ENCODE measurements at regions of chr10 and their contacts with region 1.

Region 1: DNA sequence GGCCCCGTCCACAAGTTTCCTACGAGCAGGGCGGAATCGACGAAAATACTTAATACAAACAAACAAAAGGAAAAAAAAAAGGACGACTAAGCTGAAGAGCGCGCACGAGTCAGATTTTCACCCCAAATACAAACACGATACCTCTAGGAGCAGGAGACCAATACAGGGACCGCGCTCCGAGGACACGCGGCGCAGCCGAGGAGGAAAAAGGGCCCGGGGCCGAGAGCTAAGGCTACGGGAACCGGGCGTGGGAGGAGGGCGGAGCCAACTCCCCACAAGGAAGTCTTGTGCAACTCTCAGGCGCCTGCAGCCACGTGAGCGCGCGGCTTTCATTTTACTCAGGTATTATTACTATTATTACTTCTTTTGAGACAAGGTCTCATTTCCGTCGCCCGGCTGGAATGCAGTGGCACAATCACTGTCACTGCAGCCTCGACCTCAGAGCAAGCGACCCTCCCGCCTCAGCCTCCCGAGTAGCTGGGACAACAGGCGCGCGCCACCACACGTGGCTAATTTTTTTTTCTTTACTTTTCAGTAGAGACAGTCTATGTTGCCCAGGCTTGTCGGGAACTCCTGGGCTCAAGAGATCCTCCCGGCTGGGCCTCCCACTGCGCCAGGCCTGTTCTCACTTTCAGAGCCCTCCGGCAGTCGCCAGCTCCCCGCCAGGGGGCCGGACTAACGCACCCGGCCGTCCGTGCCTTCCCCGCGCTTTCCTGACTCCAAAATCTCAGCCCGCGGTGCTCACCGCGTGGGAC is 1.2 kb downstream of the HNRNPF start:
- DNase-seq: peak; percentile 94 to 95
- H3K4me3 ChIP-seq: peak overlapping the region; percentile 70
- H3K4me3 Mint-ChIP-seq: peak overlapping the region; percentile 81
- H3K27ac Mint-ChIP-seq: peak overlapping the region; percentile 94
- H3K4me1 ChIP-seq: peaks cover 40% of the 10 kb centered on the region
- H3K4me1 Mint-ChIP-seq: peaks cover 32% of the 10 kb centered on the region
- H3K27me3 ChIP-seq: no peaks in the 10 kb centered on the region
- H3K27me3 Mint-ChIP-seq: no peaks in the 10 kb centered on the region
- CTCF ChIP-seq: peak; percentile 54 to 73

Region 2: GRCh38 chr10:43361986-43362839 is 45.5 kb before region 1 on chr10:
- CTCF ChIA-PET with region 1: no interaction called
- POLR2A ChIA-PET with region 1: interaction called, 7 read pairs
- intact Hi-C with region 1: loop called (anchors 1 kb)
- DNase-seq: peak; percentile 99
- H3K4me3 ChIP-seq: peak overlapping the region; percentile 66
- H3K4me3 Mint-ChIP-seq: peak overlapping the region; percentile 98
- H3K27ac Mint-ChIP-seq: peak overlapping the region; percentile 71
- H3K4me1 ChIP-seq: peaks cover 11% of the 10 kb centered on the region
- H3K4me1 Mint-ChIP-seq: peaks cover 16% of the 10 kb centered on the region
- H3K27me3 ChIP-seq: no peaks in the 10 kb centered on the region
- H3K27me3 Mint-ChIP-seq: no peaks in the 10 kb centered on the region
- CTCF ChIP-seq: peak; percentile 68 to 83

Region 3: DNA sequence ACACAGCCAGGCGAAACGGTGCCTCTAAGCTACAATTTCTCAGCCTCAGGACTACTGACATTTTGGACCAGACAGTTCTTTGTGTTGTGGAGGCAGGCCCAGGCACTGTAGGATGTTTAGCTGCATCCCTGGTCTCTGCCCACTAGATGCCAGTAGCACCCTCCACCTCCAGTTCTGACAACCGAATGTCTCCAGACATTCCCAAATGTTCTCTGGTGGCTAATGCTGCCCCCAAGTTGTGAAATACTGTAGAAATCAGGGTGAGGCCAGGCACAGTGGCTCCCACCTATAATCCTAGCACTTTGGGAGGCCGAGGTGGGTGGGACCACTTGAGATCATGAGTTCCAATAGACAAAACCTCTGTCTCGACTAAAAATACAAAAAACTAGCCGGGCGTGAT is 17.0 kb before region 1 on chr10:
- CTCF ChIA-PET with region 1: no interaction called
- POLR2A ChIA-PET with region 1: interaction called, 81 read pairs
- intact Hi-C with region 1: no loop called
- DNase-seq: peak in 1 of 2 experiments; percentile 66
- H3K4me3 ChIP-seq: no peak overlapping the region
- H3K4me3 Mint-ChIP-seq: peak overlapping the region; percentile 4
- H3K27ac Mint-ChIP-seq: peak overlapping the region; percentile 68
- H3K4me1 ChIP-seq: peaks cover 37% of the 10 kb centered on the region
- H3K4me1 Mint-ChIP-seq: peaks cover 60% of the 10 kb centered on the region
- H3K27me3 ChIP-seq: no peaks in the 10 kb centered on the region
- H3K27me3 Mint-ChIP-seq: no peaks in the 10 kb centered on the region
- CTCF ChIP-seq: peak; percentile 55 to 71

Region 4: GRCh38 chr10:43396928-43397624 is 10.7 kb before region 1 on chr10:
- CTCF ChIA-PET with region 1: interaction called, 4 read pairs
- POLR2A ChIA-PET with region 1: interaction called, 81 read pairs
- intact Hi-C with region 1: loop called (anchors 1 kb)
- DNase-seq: peak; percentile 99
- H3K4me3 ChIP-seq: peak overlapping the region; percentile 62
- H3K4me3 Mint-ChIP-seq: peak overlapping the region; percentile 81
- H3K27ac Mint-ChIP-seq: peak overlapping the region; percentile 94
- H3K4me1 ChIP-seq: peaks cover 59% of the 10 kb centered on the region
- H3K4me1 Mint-ChIP-seq: peaks cover 33% of the 10 kb centered on the region
- H3K27me3 ChIP-seq: no peaks in the 10 kb centered on the region
- H3K27me3 Mint-ChIP-seq: no peaks in the 10 kb centered on the region
- CTCF ChIP-seq: no peak

Region 5: DNA sequence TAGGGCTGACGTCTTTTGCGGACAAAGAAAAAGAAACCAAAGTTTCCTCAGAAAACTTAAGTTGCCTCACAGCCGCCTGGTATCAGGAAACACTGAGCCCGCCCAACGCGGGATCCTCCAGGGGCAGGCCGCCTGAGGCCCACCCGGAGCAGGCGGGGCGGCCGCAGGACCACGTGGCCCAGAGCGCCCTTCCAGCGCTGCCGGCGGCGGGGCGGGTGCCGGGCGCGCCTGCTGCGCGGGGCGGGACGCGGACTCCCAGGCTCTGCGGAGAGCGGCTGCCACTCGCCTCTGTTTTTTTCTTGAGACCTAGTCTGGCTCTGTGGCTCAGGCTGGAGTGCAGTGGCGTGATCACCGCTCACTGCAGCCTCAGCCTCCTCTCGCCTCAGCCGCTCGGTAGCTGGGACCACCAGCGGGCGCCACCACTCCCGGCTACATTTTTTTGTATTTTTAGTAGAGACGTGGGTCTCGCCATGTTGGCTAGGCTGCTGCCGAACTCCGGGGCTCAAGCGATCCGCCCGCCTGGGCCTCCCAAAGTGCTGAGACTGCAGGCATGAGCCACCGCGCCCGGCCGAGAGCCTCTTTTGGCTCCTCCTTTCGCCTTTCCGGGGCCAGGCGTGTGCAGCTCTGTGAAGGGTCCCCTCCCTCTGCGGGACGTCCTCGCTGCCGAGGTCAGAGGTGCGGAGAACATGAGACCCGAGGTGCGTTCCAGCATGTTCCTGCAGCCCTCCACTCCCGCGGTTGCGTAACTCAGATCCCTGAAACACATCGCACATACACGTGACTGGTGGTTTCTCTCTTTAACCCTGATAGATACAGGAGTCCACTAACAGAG is 12.8 kb after region 1 on chr10:
- CTCF ChIA-PET with region 1: interaction called, 8 read pairs
- POLR2A ChIA-PET with region 1: interaction called, 27 read pairs
- intact Hi-C with region 1: no loop called
- DNase-seq: peak; percentile 97 to 98
- H3K4me3 ChIP-seq: peak overlapping the region; percentile 68
- H3K4me3 Mint-ChIP-seq: peak overlapping the region; percentile 96
- H3K27ac Mint-ChIP-seq: peak overlapping the region; percentile 99
- H3K4me1 ChIP-seq: peaks cover 9% of the 10 kb centered on the region; the same call in 1 of the 2 replicates
- H3K4me1 Mint-ChIP-seq: peaks cover 17% of the 10 kb centered on the region
- H3K27me3 ChIP-seq: no peaks in the 10 kb centered on the region
- H3K27me3 Mint-ChIP-seq: no peaks in the 10 kb centered on the region
- CTCF ChIP-seq: peak in 1 of 2 experiments; percentile 33

Region 6: DNA sequence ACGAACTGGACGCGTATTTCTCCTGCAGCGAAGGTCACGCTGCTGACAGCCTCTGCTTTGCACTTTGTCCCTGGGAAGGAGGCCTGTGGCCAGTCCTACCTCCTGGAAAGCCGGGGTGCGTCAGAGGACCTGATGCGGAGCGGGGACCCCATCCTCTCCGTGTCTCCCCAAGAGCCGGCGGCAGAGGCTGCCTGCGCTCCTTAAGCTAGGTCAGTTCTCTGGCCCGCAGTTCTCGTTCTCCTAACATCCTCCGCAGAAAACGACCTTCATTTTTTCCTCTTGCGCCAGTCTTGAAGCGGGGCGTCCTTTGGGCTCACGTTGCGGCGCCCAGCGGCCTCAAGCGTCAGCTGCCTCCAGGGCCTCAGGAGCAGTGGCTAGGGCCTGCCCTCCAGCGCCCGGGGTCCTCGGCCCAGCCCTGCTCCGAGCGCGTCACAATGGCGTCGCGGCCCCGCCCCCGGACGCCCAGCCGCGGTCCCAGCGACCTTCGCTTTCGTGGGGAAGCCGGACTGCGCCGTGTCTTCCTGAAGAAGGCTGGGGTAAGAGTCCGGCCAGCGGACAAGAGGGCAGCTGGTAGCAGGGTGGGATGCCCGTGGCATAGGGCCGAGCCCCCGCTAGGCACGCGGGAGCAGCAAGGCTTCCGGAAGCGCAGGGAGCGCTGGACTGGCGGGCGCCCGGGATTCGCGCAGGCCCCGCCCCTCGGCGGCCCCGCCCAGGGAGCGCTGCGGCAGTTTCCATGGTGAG is 28.8 kb after region 1 on chr10 and contains the start of gene ZNF487:
- CTCF ChIA-PET with region 1: no interaction called
- POLR2A ChIA-PET with region 1: interaction called, 11 read pairs
- intact Hi-C with region 1: loop called (anchors 1 kb)
- DNase-seq: peak; percentile 94 to 98
- H3K4me3 ChIP-seq: peak within 1 kb of the TSS; percentile 87
- H3K4me3 Mint-ChIP-seq: peak within 1 kb of the TSS; percentile 97
- H3K27ac Mint-ChIP-seq: peak within 1 kb of the TSS; percentile 98
- H3K4me1 ChIP-seq: peaks cover 10% of the 10 kb centered on the region; the same call in 1 of the 2 replicates
- H3K4me1 Mint-ChIP-seq: no peaks in the 10 kb centered on the region
- H3K27me3 ChIP-seq: no peaks in the 10 kb centered on the region
- H3K27me3 Mint-ChIP-seq: no peaks in the 10 kb centered on the region
- CTCF ChIP-seq: peak in 1 of 2 experiments; percentile 62
- total RNA-seq, gene ZNF487: 5.0 and 6.5 TPM in 2 replicates